Calu3 (cell line): ENCODE measurements at regions of chr2 and their contacts with region 1.

Region 1: DNA sequence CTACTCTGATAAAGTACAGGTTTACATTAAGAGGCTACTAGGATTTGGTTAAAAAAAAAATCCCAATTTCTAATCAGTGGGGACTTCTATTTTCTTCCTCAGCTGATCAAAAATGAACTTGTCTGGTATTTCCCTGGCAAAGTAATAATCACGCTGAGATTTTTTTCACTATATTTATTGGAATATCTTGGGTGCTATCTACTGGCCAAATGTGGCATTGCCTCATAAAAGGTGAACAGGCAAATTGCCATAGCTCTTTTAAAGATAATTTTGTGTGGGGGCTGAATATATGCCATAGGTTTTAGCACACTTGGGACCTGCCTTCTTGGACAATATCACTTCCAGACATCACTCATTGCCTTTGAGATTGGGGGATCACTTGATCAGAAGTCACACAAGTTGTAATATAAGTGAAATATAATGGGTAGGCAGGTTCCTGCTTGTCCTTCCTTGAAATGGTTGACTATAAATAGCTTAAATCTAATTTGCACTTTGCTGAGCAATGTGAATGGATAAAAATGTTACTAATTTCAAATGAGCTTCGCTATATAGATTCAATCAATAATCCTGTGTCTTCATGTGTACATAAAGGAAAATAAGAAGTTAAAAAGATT is 7.0 kb upstream of the NXPH2 start:
- DNase-seq: peak; percentile 34
- H3K4me3 Mint-ChIP-seq: no peak overlapping the region
- H3K27ac Mint-ChIP-seq: no peak overlapping the region
- H3K4me1 Mint-ChIP-seq: peaks cover 7% of the 10 kb centered on the region
- H3K27me3 Mint-ChIP-seq: peaks cover 9% of the 10 kb centered on the region
- CTCF ChIP-seq: peak; percentile 71

Region 2: GRCh38 chr2:137888845-137889244 is 898.3 kb before region 1 on chr2:
- CTCF ChIA-PET with region 1: interaction called, 11 read pairs
- intact Hi-C with region 1: no loop called
- DNase-seq: peak; percentile 77
- H3K4me3 Mint-ChIP-seq: no peak overlapping the region
- H3K27ac Mint-ChIP-seq: no peak overlapping the region
- H3K4me1 Mint-ChIP-seq: peaks cover 8% of the 10 kb centered on the region
- H3K27me3 Mint-ChIP-seq: no peaks in the 10 kb centered on the region
- CTCF ChIP-seq: peak; percentile 52

Region 3: DNA sequence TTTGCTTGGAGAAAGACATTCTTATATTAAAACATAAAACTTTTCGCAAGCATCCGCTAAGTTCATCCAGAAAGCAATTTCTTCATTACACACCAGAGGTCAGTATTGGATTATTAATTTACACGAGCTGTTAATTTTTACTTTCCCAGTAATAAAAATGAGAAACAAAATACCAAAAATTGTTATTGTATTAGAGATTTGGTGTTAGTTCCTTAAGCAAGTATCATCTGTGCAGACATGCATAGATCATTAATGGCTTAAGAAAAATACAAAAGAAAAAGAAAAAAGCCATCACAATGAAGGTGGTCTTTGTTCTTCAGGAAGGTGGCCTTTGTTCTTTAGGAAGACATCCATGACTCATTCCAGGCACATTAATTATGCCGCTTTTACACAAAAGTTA is 876.5 kb before region 1 on chr2:
- CTCF ChIA-PET with region 1: interaction called, 6 read pairs
- intact Hi-C with region 1: loop called (anchors 1 kb)
- DNase-seq: no peak
- H3K4me3 Mint-ChIP-seq: no peak overlapping the region
- H3K27ac Mint-ChIP-seq: no peak overlapping the region
- H3K4me1 Mint-ChIP-seq: peaks cover 17% of the 10 kb centered on the region
- H3K27me3 Mint-ChIP-seq: no peaks in the 10 kb centered on the region
- CTCF ChIP-seq: peak; percentile 53

Region 4: GRCh38 chr2:138707392-138708074 is 79.6 kb before region 1 on chr2:
- CTCF ChIA-PET with region 1: no interaction called
- intact Hi-C with region 1: no loop called
- DNase-seq: no peak
- H3K4me3 Mint-ChIP-seq: no peak overlapping the region
- H3K27ac Mint-ChIP-seq: no peak overlapping the region
- H3K4me1 Mint-ChIP-seq: peaks cover 49% of the 10 kb centered on the region
- H3K27me3 Mint-ChIP-seq: no peaks in the 10 kb centered on the region
- CTCF ChIP-seq: no peak

Region 5: GRCh38 chr2:139622691-139623090 is 835.5 kb after region 1 on chr2:
- CTCF ChIA-PET with region 1: no interaction called
- intact Hi-C with region 1: no loop called
- DNase-seq: no peak
- H3K4me3 Mint-ChIP-seq: no peak overlapping the region
- H3K27ac Mint-ChIP-seq: no peak overlapping the region
- H3K4me1 Mint-ChIP-seq: no peaks in the 10 kb centered on the region
- H3K27me3 Mint-ChIP-seq: no peaks in the 10 kb centered on the region
- CTCF ChIP-seq: no peak